ENCODE measurements at regions of chr13 and their contacts with region 1.

Region 1: DNA sequence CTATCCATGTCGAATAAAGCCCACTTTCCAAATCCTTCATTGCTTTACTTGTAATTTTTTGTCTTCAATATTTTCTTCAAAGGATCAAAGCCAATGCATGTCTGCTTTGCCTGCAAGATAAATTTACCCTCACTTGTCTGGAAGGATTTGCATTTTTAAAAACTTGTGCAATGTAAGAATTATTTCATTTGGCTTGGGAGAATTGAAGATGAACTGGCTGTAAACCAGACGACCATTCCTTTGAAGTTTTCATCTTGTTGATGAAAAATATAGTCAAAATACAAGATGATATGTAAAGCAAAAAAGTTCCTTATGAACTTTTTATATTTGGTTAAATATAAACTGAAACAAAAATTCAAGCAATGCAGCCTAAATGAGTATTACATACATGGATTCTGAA is 225.0 kb downstream of the SLITRK1 start:
- DNase-seq: no peak
- ATAC-seq: no peak
- H3K4me3 Mint-ChIP-seq: no peak overlapping the region
- H3K27ac Mint-ChIP-seq: no peak overlapping the region
- H3K4me1 Mint-ChIP-seq: no peaks in the 10 kb centered on the region
- H3K27me3 Mint-ChIP-seq: no peaks in the 10 kb centered on the region

Region 2: DNA sequence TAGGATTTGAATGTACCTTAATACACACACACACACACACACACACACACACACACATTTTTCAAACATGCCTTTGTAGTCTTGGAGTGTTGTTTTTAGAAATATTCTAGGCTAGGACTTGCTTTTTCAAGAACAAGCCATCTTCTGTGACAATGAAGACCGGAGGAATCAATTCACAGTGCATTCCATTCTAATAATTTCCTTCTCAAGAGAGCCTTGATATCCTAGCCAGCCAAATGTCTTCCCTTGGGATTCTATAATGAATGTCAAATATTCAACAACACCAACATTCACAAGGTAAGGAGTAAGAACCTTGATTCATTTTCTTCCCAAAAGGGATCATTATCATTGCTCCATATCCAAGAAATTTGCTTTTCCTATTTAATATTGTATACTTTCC is 44.7 kb after region 1 on chr13:
- CTCF ChIA-PET with region 1: no interaction called
- POLR2A ChIA-PET with region 1: no interaction called
- intact Hi-C with region 1: loop called in 1 of 2 experiments (anchors 5 kb)
- DNase-seq: no peak
- ATAC-seq: no peak
- H3K4me3 Mint-ChIP-seq: no peak overlapping the region
- H3K27ac Mint-ChIP-seq: no peak overlapping the region
- H3K4me1 Mint-ChIP-seq: no peaks in the 10 kb centered on the region
- H3K27me3 Mint-ChIP-seq: no peaks in the 10 kb centered on the region

Measured in activated CD4-positive, alpha-beta T cell treated with anti-CD3 and anti-CD28 coated beads for 36 hours (primary cell).